Activated naive CD4-positive, alpha-beta T cell treated with anti-CD3 and anti-CD28 coated beads, Interleukin-2, amount 10 ng/mL, durations not matched to agents 7 days and 5 days (primary cell): ENCODE measurements at regions of chr4 and their contacts with region 1.

Region 1: DNA sequence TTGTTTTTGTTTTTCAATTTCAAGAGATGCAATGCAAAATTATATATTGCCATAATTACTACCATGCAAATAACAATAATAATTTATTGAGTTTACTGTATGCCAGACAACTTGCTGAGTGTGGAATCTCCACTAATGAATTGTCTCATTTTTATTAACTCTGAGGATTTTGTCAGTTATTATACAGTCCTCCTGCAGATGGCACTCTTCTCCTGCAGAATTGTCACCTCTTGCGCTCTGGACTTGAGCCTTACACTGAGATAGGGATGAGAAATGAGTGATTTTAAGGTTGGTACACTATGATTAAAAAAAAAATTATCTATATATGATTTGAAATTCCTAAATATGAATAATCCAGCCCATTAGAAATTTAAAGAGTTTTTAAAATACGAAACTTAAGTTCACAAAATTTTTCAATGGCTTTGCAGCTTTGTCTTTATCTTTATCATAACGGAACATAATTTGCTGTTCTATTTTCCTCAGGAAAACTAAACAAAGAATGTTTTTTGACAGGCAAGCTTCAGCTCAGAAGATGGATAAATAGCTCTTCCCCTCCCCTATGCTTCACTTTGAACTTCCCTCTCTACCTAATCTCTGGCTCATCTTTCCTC is 12.7 kb upstream of the PAQR3 start:
- DNase-seq: peak; percentile 45
- H3K4me3 Mint-ChIP-seq: no peak overlapping the region
- H3K27ac Mint-ChIP-seq: no peak overlapping the region
- H3K4me1 Mint-ChIP-seq: no peaks in the 10 kb centered on the region
- H3K27me3 Mint-ChIP-seq: peaks cover 10% of the 10 kb centered on the region

Region 2: GRCh38 chr4:78928835-78929234 is 23.1 kb before region 1 on chr4:
- CTCF ChIA-PET with region 1: no interaction called
- DNase-seq: no peak
- H3K4me3 Mint-ChIP-seq: no peak overlapping the region
- H3K27ac Mint-ChIP-seq: no peak overlapping the region
- H3K4me1 Mint-ChIP-seq: peaks cover under 1% of the 10 kb centered on the region
- H3K27me3 Mint-ChIP-seq: no peaks in the 10 kb centered on the region

Region 3: GRCh38 chr4:78962597-78963115 is 10.7 kb after region 1 on chr4:
- CTCF ChIA-PET with region 1: interaction called, 13 read pairs
- DNase-seq: no peak
- H3K4me3 Mint-ChIP-seq: no peak overlapping the region
- H3K27ac Mint-ChIP-seq: no peak overlapping the region
- H3K4me1 Mint-ChIP-seq: no peaks in the 10 kb centered on the region
- H3K27me3 Mint-ChIP-seq: peaks cover 4% of the 10 kb centered on the region